ENCODE measurements at regions of chr9 and their contacts with region 1.

Region 1: DNA sequence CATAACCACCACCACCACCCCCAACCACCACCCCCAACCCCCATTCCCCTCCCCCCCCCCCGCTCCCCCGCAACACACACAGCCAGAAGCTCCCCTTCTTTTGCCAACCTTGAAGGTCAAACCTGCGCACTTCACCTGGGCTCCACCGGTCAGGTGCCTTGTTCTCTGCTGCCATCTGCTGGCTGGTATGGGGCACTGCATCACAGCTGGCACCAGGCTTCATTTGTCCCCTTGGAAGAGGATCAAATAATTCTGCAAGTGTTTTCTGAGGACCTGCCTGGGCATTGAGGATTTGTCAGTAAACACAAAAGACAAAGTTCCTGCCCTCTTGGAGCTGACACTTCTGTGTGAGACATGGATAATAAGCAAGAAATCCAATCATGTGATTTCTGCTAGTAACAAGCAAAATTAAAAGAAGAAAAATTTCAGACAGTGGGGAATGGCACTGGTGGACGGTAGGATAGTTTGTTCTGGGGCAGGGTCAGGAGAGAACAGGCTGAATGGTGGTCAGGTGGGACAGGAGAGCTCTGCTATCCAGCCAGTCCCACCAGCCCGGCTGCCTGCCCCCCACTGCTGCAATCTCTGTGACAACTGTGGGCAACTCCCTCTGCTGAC is 55.6 kb upstream of the LMX1B start:
- DNase-seq: peak; percentile 73
- H3K4me3 Mint-ChIP-seq: no peak overlapping the region
- H3K27ac Mint-ChIP-seq: no peak overlapping the region
- H3K4me1 Mint-ChIP-seq: no peaks in the 10 kb centered on the region
- H3K27me3 Mint-ChIP-seq: peaks cover 35% of the 10 kb centered on the region

Region 2: DNA sequence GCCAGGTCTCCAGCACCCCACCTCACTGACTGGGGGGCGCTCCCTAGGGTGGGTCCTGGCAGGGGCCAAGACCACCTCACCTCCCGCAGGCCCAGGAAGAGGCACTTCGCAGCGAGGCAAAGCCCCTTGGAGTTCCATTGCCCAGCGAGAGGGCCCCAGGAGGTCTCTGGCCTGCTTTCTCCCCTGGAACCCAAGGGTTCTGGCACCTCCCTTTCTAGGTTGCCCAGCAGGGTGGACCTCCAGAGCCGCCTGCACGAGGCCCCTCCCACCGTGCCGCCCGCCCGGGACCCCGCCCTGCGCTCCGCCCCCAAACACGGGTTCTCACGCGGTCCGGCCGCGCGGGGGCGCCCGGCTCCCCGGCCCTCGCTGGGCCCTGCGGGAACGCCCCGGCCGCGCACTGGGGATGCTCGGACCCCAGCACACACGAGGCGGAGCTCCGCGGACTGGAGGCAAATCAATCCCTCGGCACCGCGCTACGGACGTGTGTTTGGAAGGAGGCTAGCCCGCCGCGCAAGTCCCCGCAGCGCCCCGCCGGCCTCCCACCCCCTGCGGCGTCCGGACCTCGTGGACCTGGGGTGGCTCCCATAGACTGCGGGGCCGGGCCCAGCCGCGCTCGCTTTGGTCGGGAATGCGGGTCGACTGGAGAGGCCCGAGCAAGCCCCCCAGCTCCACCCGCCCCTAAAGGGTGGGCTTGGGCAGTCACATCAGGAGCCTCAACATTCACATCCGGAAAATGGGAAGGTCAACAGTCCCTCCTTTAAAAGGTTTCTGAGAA is 43.9 kb before region 1 on chr9:
- CTCF ChIA-PET with region 1: interaction called, 24 read pairs
- POLR2A ChIA-PET with region 1: interaction called, 3 read pairs
- DNase-seq: peak; percentile 63
- H3K4me3 Mint-ChIP-seq: no peak overlapping the region
- H3K27ac Mint-ChIP-seq: no peak overlapping the region
- H3K4me1 Mint-ChIP-seq: peaks cover 35% of the 10 kb centered on the region
- H3K27me3 Mint-ChIP-seq: peaks cover 68% of the 10 kb centered on the region